H1 (cell line): ENCODE measurements at regions of chr12 and their contacts with region 1.

Region 1: DNA sequence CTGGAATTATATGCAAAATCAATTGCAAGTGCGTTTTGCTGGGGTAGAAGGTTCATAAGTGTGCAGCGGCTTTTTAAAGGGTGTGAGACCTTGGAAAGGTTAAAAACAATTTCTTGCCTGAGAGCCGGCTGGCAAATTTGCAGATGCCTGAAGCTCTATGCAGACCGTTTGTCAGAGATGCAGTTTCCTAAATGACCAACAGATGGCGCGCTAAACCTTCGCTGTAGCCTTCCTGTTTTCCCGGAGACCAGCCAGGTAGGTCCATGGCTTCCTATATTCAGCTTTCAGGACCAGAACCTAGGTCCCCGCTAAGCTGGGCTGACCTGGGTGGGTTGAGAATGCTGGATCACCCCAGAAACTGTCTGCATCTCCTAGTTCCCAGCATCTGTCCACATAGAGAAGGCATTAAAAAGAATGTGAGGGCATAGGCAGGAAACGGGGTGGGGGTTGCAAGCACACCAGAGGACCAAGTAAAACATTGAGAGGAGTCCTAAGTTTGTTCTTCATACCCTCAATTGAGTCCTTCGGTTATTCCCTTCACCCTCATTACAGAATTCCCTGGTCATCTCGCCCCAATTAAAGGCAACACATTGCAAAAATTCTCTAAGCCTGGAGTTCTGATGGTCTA is 5.7 kb upstream of the NOS1 start:
- DNase-seq: peak; percentile 66 to 95
- H3K4me3 ChIP-seq: no peak overlapping the region
- H3K27ac ChIP-seq: no peak overlapping the region
- H3K4me1 ChIP-seq: no peaks in the 10 kb centered on the region; a peak in 2 of 7 replicates
- H3K27me3 ChIP-seq: peaks cover 5 to 26% (median 18%) of the 10 kb centered on the region in 4 experiments
- CTCF ChIP-seq: peak; percentile 78 to 96 (median 95)
- EP300 ChIP-seq: no peak
- POLR2A ChIP-seq: no peak
- RAD21 ChIP-seq: peak; percentile 97 to 99

Region 2: GRCh38 chr12:117212563-117213190 is 154.4 kb before region 1 on chr12:
- CTCF ChIA-PET with region 1: interaction called, 17 read pairs
- POLR2A ChIA-PET with region 1: interaction called, 4 read pairs
- DNase-seq: peak; percentile 34 to 88
- H3K4me3 ChIP-seq: no peak overlapping the region
- H3K27ac ChIP-seq: no peak overlapping the region
- H3K4me1 ChIP-seq: peaks cover 0 to 4% (median 2%) of the 10 kb centered on the region in 4 experiments; a peak in 2 of 7 replicates
- H3K27me3 ChIP-seq: no peaks in the 10 kb centered on the region
- CTCF ChIP-seq: peak; percentile 66 to 92 (median 87)
- EP300 ChIP-seq: no peak
- POLR2A ChIP-seq: no peak
- RAD21 ChIP-seq: peak; percentile 97 to 98

Region 3: DNA sequence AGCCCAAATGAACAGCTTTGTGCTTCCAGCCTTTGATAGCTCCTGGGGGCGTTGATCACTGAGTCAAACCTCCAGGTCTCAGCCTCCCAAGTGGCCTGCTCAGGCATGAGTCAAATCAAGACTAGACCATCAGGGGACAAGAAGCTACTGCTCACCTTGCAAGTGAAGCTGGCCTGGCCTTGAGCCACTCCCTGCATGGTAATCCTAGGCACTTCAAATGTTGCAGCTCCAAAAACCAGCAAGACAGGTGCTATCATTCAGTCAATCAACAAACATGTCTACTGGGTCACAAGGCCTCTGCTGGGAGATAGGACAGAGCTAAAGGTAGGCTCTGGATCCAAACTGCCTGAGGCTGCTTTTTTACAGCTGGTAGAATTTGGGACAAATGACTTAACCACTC is 27.4 kb after region 1 on chr12:
- CTCF ChIA-PET with region 1: interaction called, 18 read pairs
- POLR2A ChIA-PET with region 1: no interaction called
- DNase-seq: no peak
- H3K4me3 ChIP-seq: no peak overlapping the region
- H3K27ac ChIP-seq: no peak overlapping the region
- H3K4me1 ChIP-seq: no peaks in the 10 kb centered on the region
- H3K27me3 ChIP-seq: no peaks in the 10 kb centered on the region
- CTCF ChIP-seq: no peak
- EP300 ChIP-seq: no peak
- POLR2A ChIP-seq: no peak
- RAD21 ChIP-seq: no peak

Region 4: GRCh38 chr12:117466677-117467362 is 99.7 kb after region 1 on chr12:
- CTCF ChIA-PET with region 1: interaction called, 23 read pairs
- POLR2A ChIA-PET with region 1: no interaction called
- DNase-seq: no peak
- H3K4me3 ChIP-seq: no peak overlapping the region
- H3K27ac ChIP-seq: no peak overlapping the region
- H3K4me1 ChIP-seq: no peaks in the 10 kb centered on the region
- H3K27me3 ChIP-seq: no peaks in the 10 kb centered on the region
- CTCF ChIP-seq: no peak
- EP300 ChIP-seq: no peak
- POLR2A ChIP-seq: no peak
- RAD21 ChIP-seq: no peak

Region 5: GRCh38 chr12:117498256-117498655 is 131.1 kb after region 1 on chr12:
- CTCF ChIA-PET with region 1: no interaction called
- POLR2A ChIA-PET with region 1: no interaction called
- DNase-seq: no peak
- H3K4me3 ChIP-seq: no peak overlapping the region
- H3K27ac ChIP-seq: no peak overlapping the region
- H3K4me1 ChIP-seq: peaks cover 0 to 6% (median 3%) of the 10 kb centered on the region in 4 experiments; a peak in 3 of 7 replicates
- H3K27me3 ChIP-seq: no peaks in the 10 kb centered on the region
- CTCF ChIP-seq: no peak
- EP300 ChIP-seq: no peak
- POLR2A ChIP-seq: no peak
- RAD21 ChIP-seq: no peak

Region 6: DNA sequence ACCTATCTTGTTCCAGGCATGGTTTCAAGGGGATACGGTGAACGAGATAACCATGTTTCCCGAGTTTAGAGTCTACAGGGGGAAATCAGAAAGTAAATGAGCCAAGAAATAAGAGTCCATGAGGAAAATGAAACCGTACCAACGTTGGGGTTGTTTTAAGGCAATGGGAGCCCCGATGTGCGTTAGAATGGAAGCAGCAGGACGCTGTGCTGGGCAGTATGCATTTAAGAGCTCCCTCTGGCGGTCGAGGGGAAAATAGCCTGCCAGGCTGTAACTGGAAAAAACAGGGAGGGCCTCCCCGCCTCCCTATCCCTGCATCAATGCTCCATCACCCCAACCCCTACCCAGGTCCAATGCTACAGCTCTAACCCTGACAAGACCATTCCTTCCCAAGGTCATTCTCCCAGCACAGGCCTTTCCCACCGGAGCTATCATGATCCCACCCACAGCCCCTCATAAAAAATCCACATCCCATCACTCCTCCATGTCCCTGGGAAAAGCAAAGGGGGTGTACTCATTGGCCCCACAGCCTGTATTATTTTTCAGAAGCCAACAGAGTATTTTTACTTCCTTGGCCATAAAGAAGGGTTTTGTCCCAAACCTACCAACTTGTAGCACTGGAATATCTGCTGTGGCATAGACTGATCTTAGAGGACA is 220.6 kb after region 1 on chr12:
- CTCF ChIA-PET with region 1: interaction called, 89 read pairs
- POLR2A ChIA-PET with region 1: no interaction called
- DNase-seq: peak; percentile 36 to 89
- H3K4me3 ChIP-seq: no peak overlapping the region
- H3K27ac ChIP-seq: no peak overlapping the region
- H3K4me1 ChIP-seq: peaks cover 6 to 10% (median 7%) of the 10 kb centered on the region in 4 experiments
- H3K27me3 ChIP-seq: no peaks in the 10 kb centered on the region
- CTCF ChIP-seq: peak; percentile 84 to 96 (median 92)
- EP300 ChIP-seq: no peak
- POLR2A ChIP-seq: no peak
- RAD21 ChIP-seq: peak; percentile 81 to 83

Region 7: GRCh38 chr12:117836999-117837736 is 470.0 kb after region 1 on chr12:
- CTCF ChIA-PET with region 1: interaction called, 38 read pairs
- POLR2A ChIA-PET with region 1: no interaction called
- DNase-seq: peak; percentile 70 to 96
- H3K4me3 ChIP-seq: peak overlapping the region in 1 of 4 experiments; percentile 39; a peak in 1 of 8 replicates
- H3K27ac ChIP-seq: no peak overlapping the region
- H3K4me1 ChIP-seq: peaks cover 0 to 5% (median 2%) of the 10 kb centered on the region in 4 experiments; a peak in 4 of 7 replicates
- H3K27me3 ChIP-seq: no peaks in the 10 kb centered on the region
- CTCF ChIP-seq: peak; percentile 95 to 100 (median 99)
- EP300 ChIP-seq: no peak
- POLR2A ChIP-seq: no peak
- RAD21 ChIP-seq: peak; percentile 97 to 98